Activated CD4-positive, alpha-beta memory T cell treated with anti-CD3 and anti-CD28 coated beads for 36 hours (primary cell): ENCODE measurements at regions of chr18 and their contacts with region 1.

Region 1: GRCh38 chr18:47997338-47997780 is 66.9 kb upstream of the SMAD2 start:
- DNase-seq: peak; percentile 65
- H3K4me3 Mint-ChIP-seq: no peak overlapping the region
- H3K27ac Mint-ChIP-seq: no peak overlapping the region
- H3K4me1 Mint-ChIP-seq: no peaks in the 10 kb centered on the region
- H3K27me3 Mint-ChIP-seq: no peaks in the 10 kb centered on the region

Region 2: DNA sequence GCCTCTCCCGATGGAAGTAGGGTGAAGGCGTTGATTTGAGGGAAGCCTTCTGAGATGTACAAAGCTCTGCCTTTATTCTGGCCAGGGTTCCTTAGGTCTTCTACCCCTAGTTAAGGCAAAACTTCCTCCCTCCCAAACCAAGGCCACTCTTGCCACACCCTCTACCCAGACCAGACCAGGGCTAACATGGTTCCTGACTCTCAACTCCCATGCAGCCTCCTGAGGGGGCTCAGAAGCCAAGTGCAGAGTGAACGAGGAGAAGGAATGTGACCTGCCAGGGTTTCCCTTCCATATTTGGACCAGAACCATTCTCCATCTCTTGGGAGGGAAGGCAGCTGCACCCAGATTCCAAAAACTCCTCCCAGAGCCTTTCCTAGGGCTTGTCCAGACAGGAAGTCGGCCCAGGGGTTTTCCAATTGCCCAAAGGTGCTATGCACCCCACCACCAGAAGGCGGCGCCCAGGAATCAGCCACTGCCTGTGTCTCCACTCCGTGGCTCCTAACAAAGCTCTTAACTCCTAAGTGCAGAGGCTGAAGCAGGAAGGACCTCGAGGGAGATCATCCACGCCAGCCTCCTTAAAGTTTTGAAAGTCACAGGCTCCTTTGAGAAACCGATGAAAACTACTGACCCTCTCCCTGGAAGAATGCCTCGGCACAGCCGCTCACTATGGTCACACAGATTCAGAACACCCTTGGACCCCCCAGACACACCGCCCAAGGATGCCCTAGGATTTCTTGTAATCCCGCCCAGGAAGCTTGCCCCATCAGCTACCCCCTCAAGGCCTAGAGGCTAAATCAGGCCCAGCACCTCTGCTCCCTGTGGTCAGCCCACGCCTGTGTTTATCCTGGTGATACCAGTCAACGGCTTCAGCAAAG is 224.7 kb before region 1 on chr18:
- CTCF ChIA-PET with region 1: interaction called, 37 read pairs
- POLR2A ChIA-PET with region 1: no interaction called
- intact Hi-C with region 1: loop called (anchors 5 kb)
- DNase-seq: peak; percentile 73
- H3K4me3 Mint-ChIP-seq: no peak overlapping the region
- H3K27ac Mint-ChIP-seq: no peak overlapping the region
- H3K4me1 Mint-ChIP-seq: no peaks in the 10 kb centered on the region
- H3K27me3 Mint-ChIP-seq: peaks cover 13% of the 10 kb centered on the region

Region 3: DNA sequence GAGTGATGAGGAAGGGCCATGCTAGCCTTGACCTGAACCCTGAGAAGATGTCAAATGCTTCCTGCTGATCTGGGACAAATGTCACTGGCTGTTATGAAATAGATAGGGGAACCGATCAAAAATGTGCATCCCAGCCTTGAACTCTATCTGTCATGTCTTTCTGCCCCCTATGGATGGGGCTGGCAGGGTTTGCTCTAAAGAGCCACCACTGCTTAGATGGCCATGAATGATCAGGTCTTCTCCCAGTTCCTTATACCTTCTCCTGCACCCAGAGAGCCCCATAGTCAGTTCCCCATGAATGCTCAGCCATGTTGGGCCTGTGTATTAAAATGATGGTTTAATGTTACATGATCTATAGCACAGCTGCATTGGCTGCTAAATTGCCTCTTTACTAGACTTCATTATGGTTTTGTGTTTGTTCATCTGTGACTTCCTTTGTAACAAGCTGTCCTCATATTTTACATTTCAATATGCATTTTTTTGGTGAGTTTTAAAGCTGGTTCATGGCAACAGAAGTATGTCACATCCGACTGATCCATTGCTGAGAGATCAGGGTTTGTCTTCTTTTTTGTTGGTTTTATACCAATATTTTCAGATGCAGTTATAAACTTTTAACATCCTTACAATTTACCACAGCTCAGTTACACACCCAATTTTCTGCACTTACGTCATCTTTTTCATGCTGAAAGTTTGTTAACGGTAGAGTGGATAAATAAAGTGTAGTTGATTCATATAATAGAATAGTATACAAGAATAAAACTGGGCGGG is 10.6 kb before region 1 on chr18:
- CTCF ChIA-PET with region 1: interaction called, 10 read pairs
- POLR2A ChIA-PET with region 1: no interaction called
- intact Hi-C with region 1: no loop called
- DNase-seq: no peak
- H3K4me3 Mint-ChIP-seq: no peak overlapping the region
- H3K27ac Mint-ChIP-seq: no peak overlapping the region
- H3K4me1 Mint-ChIP-seq: no peaks in the 10 kb centered on the region
- H3K27me3 Mint-ChIP-seq: peaks cover 11% of the 10 kb centered on the region

Region 4: DNA sequence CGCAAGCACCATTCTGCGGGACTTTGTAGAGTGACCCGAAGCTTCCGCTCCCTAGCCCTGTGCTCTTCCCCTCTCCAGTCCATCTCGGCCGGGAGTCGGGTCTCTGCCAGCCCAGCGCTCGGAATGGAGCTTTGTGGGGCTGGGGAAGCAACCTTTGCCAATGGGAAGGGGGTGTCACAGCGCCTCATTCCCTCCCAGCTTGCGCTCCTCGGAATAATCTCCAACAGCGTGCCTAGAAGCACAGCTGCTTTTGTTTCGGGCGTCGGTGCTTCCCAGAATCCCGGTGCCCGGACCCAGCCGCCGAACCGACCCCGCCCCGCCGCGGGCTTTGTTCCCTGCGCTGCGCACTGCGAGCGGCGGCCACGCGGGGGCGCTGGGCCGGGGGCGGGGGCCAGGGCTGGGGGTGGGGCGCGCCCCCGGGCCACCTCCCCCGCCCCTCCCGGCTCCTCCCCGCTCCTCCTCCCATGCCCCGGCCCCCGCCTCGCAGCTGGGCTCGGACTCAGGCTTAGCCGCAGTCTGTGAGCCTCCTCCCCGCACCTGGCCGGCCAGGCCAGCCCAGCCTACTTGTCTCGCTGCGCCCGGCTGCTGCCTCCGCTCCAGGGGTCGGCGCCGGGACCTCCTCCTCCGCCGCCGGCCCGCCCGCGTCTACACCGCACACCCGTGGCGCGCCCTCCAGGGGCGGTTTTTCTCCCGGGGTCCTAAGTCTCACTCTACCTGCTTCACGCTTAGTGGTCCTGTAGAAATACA is 10.8 kb after region 1 on chr18:
- CTCF ChIA-PET with region 1: interaction called, 15 read pairs
- POLR2A ChIA-PET with region 1: no interaction called
- intact Hi-C with region 1: no loop called
- DNase-seq: peak; percentile 43
- H3K4me3 Mint-ChIP-seq: peak overlapping the region; percentile 49
- H3K27ac Mint-ChIP-seq: no peak overlapping the region
- H3K4me1 Mint-ChIP-seq: no peaks in the 10 kb centered on the region
- H3K27me3 Mint-ChIP-seq: peaks cover 26% of the 10 kb centered on the region